PC-3 (cell line): ENCODE measurements at regions of chr1 and their contacts with region 1.

Region 1: GRCh38 chr1:6794164-6794563 is 8.9 kb downstream of the CAMTA1 start:
- DNase-seq: peak; percentile 69
- ATAC-seq: no peak
- H3K4me3 ChIP-seq: no peak overlapping the region
- H3K27ac ChIP-seq: no peak overlapping the region
- H3K4me1 ChIP-seq: no peaks in the 10 kb centered on the region
- H3K27me3 ChIP-seq: no peaks in the 10 kb centered on the region
- CTCF ChIP-seq: peak; percentile 83

Region 2: DNA sequence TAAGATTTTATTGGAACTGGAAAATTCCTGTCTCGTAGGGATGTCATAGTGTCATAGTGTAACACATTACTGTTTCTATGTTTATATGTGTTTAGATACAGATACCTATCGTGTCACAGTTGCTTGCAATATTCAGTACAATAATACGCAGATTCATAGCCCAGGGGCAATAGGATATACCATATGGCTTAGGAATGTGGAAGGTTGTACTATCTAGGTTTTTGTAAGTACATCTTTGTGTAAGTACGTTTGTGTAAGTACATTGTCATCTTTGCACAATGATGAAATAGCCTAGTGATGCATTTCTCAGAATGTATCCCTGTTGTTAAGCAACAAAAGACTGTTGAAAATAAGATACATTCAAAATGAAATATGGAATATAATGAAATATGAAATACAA is 60.0 kb after region 1 on chr1:
- CTCF ChIA-PET with region 1: no interaction called
- POLR2A ChIA-PET with region 1: no interaction called
- intact Hi-C with region 1: no loop called
- DNase-seq: peak; percentile 51
- ATAC-seq: no peak
- H3K4me3 ChIP-seq: no peak overlapping the region
- H3K27ac ChIP-seq: no peak overlapping the region
- H3K4me1 ChIP-seq: no peaks in the 10 kb centered on the region
- H3K27me3 ChIP-seq: no peaks in the 10 kb centered on the region
- CTCF ChIP-seq: no peak

Region 3: DNA sequence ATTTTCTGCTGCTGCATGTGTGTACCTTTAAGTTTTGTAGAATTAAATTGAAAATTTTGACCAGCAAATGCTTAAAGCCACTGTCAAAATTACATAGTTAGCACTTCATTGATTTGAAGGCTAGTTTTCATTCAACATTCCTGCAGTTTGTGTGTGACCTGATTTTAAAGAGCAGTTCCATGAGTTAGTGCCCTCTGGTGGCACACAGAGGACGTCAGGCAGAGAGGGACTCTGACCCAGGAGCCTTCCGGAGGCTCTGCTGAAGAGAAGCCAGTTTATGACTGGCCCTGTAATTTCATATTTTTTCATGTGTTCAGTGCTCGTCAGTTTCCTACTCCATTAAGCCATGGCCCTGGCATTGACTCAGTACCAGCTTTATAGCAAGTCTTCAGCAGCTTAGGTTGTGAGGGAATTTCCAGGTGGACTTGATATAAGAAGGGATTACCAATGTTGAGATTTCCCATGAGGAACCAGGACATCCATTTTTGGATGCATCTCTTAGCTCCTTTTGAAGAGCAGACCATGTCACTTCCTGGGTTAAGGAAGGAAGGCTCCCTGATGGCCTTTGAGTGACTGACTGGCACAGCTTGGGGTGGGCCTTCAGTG is 95.8 kb after region 1 on chr1:
- CTCF ChIA-PET with region 1: no interaction called
- POLR2A ChIA-PET with region 1: no interaction called
- intact Hi-C with region 1: loop called (anchors 1 kb)
- DNase-seq: peak; percentile 69
- ATAC-seq: peak; percentile 91
- H3K4me3 ChIP-seq: no peak overlapping the region
- H3K27ac ChIP-seq: no peak overlapping the region
- H3K4me1 ChIP-seq: no peaks in the 10 kb centered on the region
- H3K27me3 ChIP-seq: no peaks in the 10 kb centered on the region
- CTCF ChIP-seq: peak; percentile 90

Region 4: DNA sequence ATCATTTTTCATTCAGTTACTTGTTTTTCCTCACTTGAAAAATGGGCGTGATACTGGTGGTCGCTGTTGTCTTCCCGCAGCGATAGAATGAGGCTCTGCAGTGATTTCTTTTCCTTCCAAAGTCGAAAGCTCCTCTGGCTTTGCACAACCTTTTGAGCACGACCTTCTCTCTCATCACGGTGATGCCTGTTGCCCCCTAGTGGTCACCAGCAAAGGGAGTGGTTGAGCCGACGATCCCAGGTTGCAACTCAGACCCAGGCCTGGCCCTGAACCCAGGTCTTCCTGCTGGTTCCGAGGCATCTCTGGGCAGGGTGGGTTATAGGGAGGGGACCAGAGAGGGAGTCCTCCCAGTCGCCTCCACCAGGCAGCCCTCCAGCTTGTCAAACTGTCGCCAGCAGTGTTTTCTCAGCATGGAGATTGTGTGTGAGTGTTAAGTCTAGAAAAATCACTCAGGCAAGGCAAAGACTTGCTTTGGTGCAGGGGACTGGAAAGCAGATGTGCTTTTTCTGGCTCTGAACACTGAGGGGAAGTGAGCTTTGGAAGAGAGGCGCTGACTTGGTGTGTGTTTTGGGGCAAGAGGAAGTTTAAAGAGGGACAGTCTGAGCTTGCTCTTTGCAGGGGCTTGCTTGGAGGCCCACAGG is 276.3 kb after region 1 on chr1:
- CTCF ChIA-PET with region 1: no interaction called
- POLR2A ChIA-PET with region 1: no interaction called
- intact Hi-C with region 1: loop called (anchors 1 kb)
- DNase-seq: peak; percentile 72
- ATAC-seq: peak; percentile 88
- H3K4me3 ChIP-seq: no peak overlapping the region
- H3K27ac ChIP-seq: no peak overlapping the region
- H3K4me1 ChIP-seq: no peaks in the 10 kb centered on the region
- H3K27me3 ChIP-seq: peaks cover 43% of the 10 kb centered on the region
- CTCF ChIP-seq: peak; percentile 88

Region 5: DNA sequence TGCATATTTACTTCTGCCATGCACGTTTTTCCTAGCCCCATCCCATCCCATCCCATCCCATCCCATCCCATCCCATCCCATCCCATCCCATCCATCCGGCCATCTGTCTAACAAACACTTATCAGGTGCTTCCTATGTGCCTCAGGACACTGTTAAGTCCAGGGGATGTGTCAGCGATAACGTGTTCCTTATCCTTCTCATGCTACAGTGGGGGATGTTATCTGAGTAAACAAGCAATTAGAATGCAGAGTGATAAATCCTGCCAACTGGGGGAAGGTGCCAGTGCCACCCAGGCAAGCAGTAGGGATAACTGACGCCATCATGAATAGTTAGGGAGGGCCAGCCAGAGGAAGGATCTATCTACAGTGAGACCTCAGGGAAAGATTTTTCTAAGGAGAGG is 295.3 kb after region 1 on chr1:
- CTCF ChIA-PET with region 1: no interaction called
- POLR2A ChIA-PET with region 1: no interaction called
- intact Hi-C with region 1: no loop called
- DNase-seq: no peak
- ATAC-seq: no peak
- H3K4me3 ChIP-seq: no peak overlapping the region
- H3K27ac ChIP-seq: no peak overlapping the region
- H3K4me1 ChIP-seq: no peaks in the 10 kb centered on the region
- H3K27me3 ChIP-seq: peaks cover 94% of the 10 kb centered on the region
- CTCF ChIP-seq: no peak

Region 6: DNA sequence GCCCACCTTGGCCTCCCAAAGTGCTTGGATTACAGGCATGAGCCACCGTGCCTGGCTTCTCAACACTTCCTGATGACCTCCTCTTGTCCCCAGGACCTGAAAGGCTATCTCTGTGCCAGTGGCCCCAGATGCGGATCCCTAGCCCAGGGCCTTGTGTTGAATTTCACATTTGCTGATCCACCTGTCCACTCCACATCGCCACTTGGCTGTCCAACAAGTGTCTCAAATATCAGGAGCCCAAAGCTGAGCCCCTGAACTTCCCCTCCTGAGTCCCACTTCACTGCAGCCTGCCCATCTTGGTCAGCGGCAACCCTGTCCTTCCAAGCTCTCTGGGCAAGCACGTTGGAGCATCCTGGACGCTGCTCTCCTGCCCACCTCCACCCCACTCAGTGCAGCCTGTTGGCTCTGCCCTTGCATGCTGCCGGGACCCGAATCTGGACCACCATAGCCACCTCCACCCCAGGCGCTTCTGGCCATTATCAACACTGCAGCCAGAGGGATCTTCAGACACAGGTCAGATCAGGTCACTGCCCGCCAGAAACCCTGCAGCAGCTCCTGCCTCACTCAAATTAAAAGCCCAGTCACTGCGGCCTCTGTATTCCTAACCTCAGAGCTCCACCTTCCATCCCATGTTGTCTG is 624.4 kb after region 1 on chr1:
- CTCF ChIA-PET with region 1: no interaction called
- POLR2A ChIA-PET with region 1: no interaction called
- intact Hi-C with region 1: no loop called
- DNase-seq: no peak
- ATAC-seq: no peak
- H3K4me3 ChIP-seq: no peak overlapping the region
- H3K27ac ChIP-seq: no peak overlapping the region
- H3K4me1 ChIP-seq: no peaks in the 10 kb centered on the region
- H3K27me3 ChIP-seq: no peaks in the 10 kb centered on the region
- CTCF ChIP-seq: no peak